ENCODE measurements at regions of chr2 and their contacts with region 1.

Region 1: GRCh38 chr2:168956392-168956791 is 55.3 kb downstream of the G6PC2 start:
- DNase-seq: no peak
- H3K4me3 ChIP-seq: no peak overlapping the region
- H3K27ac ChIP-seq: no peak overlapping the region
- H3K4me1 ChIP-seq: no peaks in the 10 kb centered on the region
- H3K27me3 ChIP-seq: no peaks in the 10 kb centered on the region
- CTCF ChIP-seq: no peak
- EP300 ChIP-seq: no peak
- POLR2A ChIP-seq: no peak

Region 2: GRCh38 chr2:168835969-168836368 is 120.4 kb before region 1 on chr2:
- intact Hi-C with region 1: no loop called
- DNase-seq: no peak
- H3K4me3 ChIP-seq: no peak overlapping the region
- H3K27ac ChIP-seq: no peak overlapping the region
- H3K4me1 ChIP-seq: no peaks in the 10 kb centered on the region
- H3K27me3 ChIP-seq: no peaks in the 10 kb centered on the region
- CTCF ChIP-seq: no peak
- EP300 ChIP-seq: no peak
- POLR2A ChIP-seq: no peak

Region 3: GRCh38 chr2:169131587-169132512 is 175.5 kb after region 1 on chr2:
- intact Hi-C with region 1: loop called (anchors 10 kb)
- DNase-seq: peak in 1 of 2 donors; percentile 60
- H3K4me3 ChIP-seq: no peak overlapping the region
- H3K27ac ChIP-seq: no peak overlapping the region
- H3K4me1 ChIP-seq: no peaks in the 10 kb centered on the region
- H3K27me3 ChIP-seq: no peaks in the 10 kb centered on the region
- CTCF ChIP-seq: peak in 5 of 7 experiments; percentile 70 to 85 (median 82)
- EP300 ChIP-seq: no peak
- POLR2A ChIP-seq: no peak

Measured in stomach (tissue), 19 donors.